Sciatic nerve (tissue), 2 donors: ENCODE measurements at regions of chr4 and their contacts with region 1.

Region 1: DNA sequence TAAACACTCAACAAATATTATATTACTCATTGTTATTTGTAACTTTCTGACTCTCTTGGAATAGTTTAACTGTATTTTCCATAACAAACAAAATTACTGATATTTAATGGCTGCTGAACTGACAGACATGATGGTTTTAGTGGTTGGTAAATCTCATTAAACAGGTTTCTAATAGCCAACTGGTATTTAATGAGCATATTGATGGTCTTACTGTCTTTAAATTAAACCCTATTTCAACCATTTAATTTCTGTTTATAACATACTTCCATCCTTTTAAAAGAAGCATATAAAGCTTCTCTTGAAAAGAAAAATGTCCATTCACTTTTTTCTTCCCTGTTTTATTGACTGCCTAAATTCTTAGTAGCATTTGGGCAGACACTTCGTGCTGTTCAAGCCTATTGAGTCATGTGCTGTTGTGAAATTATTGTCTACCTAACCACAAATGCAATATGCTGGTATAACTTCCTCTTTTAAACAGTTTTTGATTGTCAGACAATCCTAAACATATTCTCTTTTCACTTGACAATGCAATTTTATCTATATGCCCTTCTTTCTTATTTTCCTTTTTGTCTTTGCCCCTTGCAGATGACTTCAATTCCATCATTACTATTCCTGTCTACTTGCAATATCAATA is 163.9 kb upstream of the SLC7A11 start:
- DNase-seq: no peak
- ATAC-seq: peak; percentile 77

Region 2: DNA sequence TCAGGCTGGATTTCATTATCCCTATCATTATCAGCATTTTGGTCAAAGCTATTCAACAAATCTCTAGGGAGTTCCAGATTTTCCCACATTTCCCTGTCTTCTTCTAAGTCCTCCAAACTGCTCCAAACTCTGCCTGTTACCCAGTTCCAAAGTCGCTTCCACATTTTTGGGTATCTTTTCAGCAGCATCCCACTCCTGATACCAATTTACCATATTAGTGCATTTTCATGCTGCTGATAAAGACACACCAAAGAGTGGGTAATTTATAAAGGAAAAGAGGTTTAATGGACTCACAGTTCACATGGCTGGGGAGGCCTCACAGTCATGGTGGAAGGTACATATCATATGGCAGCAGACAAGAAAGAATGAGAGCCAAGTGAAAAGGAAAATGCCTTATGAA is 31.1 kb before region 1 on chr4:
- intact Hi-C with region 1: loop called (anchors 2 kb)
- DNase-seq: no peak
- ATAC-seq: no peak